ENCODE measurements at regions of chr20 and their contacts with region 1.

Region 1: GRCh38 chr20:9215539-9215938 is 146.7 kb downstream of the PLCB4 start:
- DNase-seq: no peak
- ATAC-seq: no peak
- H3K4me3 ChIP-seq: no peak overlapping the region
- H3K4me3 Mint-ChIP-seq: no peak overlapping the region
- H3K27ac ChIP-seq: no peak overlapping the region
- H3K27ac Mint-ChIP-seq: no peak overlapping the region
- H3K4me1 ChIP-seq: no peaks in the 10 kb centered on the region
- H3K4me1 Mint-ChIP-seq: peaks cover 0 to 1% (median 0%) of the 10 kb centered on the region in 7 donors
- H3K27me3 ChIP-seq: no peaks in the 10 kb centered on the region
- H3K27me3 Mint-ChIP-seq: no peaks in the 10 kb centered on the region

Region 2: DNA sequence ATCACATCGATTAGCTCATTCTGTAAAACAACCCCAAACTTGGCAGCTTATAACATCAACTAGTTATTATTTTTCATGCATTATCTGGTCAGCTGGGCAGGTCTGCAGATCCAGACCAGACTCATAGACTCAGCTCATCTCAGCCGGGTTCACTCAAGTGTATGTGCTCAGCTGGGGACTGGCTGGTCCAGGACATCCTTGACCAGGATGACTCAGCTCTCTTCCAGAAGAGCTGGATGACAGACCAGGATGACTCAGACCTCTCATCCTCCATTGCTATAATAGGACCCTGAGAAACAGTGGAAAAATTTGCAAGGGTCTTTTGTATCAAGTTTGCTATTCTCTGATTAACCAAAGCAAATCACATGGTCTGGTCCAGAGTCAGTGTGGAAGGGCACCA is 459.1 kb before region 1 on chr20:
- CTCF ChIA-PET with region 1: no interaction called
- POLR2A ChIA-PET with region 1: no interaction called
- intact Hi-C with region 1: no loop called
- DNase-seq: no peak
- ATAC-seq: peak; percentile 32
- H3K4me3 ChIP-seq: no peak overlapping the region
- H3K4me3 Mint-ChIP-seq: no peak overlapping the region
- H3K27ac ChIP-seq: no peak overlapping the region
- H3K27ac Mint-ChIP-seq: no peak overlapping the region
- H3K4me1 ChIP-seq: no peaks in the 10 kb centered on the region
- H3K4me1 Mint-ChIP-seq: peaks cover 0 to 3% (median 0%) of the 10 kb centered on the region in 7 donors
- H3K27me3 ChIP-seq: no peaks in the 10 kb centered on the region
- H3K27me3 Mint-ChIP-seq: no peaks in the 10 kb centered on the region

Region 3: GRCh38 chr20:9139106-9139833 is 76.3 kb before region 1 on chr20:
- CTCF ChIA-PET with region 1: no interaction called
- POLR2A ChIA-PET with region 1: no interaction called
- intact Hi-C with region 1: no loop called
- DNase-seq: no peak
- ATAC-seq: no peak
- H3K4me3 ChIP-seq: no peak overlapping the region
- H3K4me3 Mint-ChIP-seq: no peak overlapping the region
- H3K27ac ChIP-seq: no peak overlapping the region
- H3K27ac Mint-ChIP-seq: no peak overlapping the region
- H3K4me1 ChIP-seq: no peaks in the 10 kb centered on the region
- H3K4me1 Mint-ChIP-seq: no peaks in the 10 kb centered on the region
- H3K27me3 ChIP-seq: no peaks in the 10 kb centered on the region
- H3K27me3 Mint-ChIP-seq: no peaks in the 10 kb centered on the region

Region 4: GRCh38 chr20:9185511-9185910 is 30.0 kb before region 1 on chr20:
- CTCF ChIA-PET with region 1: no interaction called
- POLR2A ChIA-PET with region 1: no interaction called
- intact Hi-C with region 1: loop called in 1 of 2 experiments (anchors 2 kb)
- DNase-seq: no peak
- ATAC-seq: no peak
- H3K4me3 ChIP-seq: no peak overlapping the region
- H3K4me3 Mint-ChIP-seq: no peak overlapping the region
- H3K27ac ChIP-seq: no peak overlapping the region
- H3K27ac Mint-ChIP-seq: no peak overlapping the region
- H3K4me1 ChIP-seq: no peaks in the 10 kb centered on the region
- H3K4me1 Mint-ChIP-seq: no peaks in the 10 kb centered on the region
- H3K27me3 ChIP-seq: no peaks in the 10 kb centered on the region
- H3K27me3 Mint-ChIP-seq: no peaks in the 10 kb centered on the region